Astrocyte of the cerebellum (primary cell): ENCODE measurements at regions of chr15 and their contacts with region 1.

Region 1: DNA sequence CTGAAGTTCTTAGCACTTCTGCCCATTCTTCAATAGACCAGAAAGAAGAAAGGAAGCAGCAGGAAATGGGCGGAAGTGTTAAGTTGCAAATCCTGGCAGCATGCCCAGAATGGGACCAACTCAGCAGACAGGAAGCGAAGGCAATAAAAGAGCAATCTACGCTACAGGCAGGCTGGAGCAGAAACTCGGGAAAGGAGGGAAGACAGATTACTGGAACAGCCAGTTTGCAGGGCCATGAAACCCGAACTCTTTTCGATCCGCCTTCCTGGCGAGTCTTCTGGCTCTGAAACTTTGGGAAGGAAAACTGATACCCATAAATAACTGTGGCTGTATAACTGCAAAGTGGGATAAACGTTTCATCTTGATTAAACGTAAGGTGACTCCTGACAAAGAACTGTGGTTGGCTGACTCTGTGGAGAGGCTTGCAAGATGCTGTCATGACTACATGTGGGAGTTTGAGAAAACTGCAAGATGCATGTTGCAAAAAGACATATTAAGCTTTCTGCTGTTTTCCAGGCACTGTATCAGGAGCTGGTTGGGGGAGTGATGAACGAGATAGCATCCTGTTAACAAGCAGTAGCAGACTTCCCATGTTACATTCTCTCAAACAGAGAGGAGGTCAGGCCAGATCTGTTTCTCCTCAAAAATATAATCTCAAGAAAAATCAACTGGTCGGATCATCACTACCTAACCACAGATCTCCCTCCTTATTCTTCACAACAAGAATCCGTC is 67.8 kb downstream of the FMN1 start:
- DNase-seq: peak; percentile 94
- H3K4me3 ChIP-seq: no peak overlapping the region
- CTCF ChIP-seq: no peak

Region 2: DNA sequence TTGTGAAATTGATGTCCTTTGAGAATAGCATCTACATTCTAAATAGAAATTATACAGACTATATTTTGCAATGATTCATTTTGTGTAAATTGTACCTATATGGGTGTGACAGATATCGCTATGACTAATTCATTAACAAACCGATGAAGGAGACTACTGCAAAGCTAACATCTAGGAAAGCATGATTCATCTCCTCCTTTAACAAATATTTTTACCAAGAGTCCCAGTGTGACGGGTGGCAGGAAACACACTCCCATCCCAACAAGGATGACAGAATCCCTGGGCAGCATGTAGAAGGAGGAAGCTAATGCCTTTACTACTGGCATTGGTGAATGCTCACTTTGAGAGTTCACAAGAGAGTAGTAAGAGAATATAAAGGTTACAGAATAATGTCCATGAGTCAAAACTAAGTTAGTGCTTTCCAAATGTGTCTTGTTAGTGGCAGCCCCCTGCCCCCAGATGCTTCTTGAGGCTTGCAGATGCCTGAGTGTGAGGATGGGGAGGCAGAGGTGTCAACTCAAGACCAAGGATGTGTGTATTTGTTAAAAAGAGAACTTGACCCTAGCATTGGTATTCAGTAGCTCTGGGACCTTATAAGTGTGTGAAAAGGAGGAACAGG is 112.8 kb before region 1 on chr15:
- in situ Hi-C with region 1: loop called (anchors 10 kb)
- DNase-seq: no peak
- H3K4me3 ChIP-seq: no peak overlapping the region
- CTCF ChIP-seq: no peak

Region 3: GRCh38 chr15:33045066-33045810 is 81.5 kb before region 1 on chr15:
- in situ Hi-C with region 1: no loop called
- DNase-seq: peak; percentile 66
- H3K4me3 ChIP-seq: no peak overlapping the region
- CTCF ChIP-seq: no peak

Region 4: DNA sequence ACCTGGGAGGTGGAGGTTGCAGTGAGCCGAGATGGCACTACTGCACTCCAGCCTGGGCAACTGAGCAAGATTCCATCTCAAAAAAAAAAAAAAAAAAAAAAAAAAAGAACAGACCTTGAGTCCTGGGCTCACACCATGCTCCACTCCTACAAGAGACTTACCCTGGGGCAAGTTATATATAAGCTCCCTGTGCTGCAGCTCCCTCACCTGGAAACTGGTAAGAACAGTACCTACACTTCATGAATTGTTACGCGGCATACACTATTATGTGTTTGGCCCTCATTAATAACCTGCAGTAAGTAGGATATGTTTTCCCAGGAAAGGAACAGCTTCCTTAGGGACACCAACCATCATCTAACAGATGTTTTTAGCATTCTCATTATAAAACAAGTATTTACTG is 51.8 kb before region 1 on chr15:
- in situ Hi-C with region 1: loop called (anchors 10 kb)
- DNase-seq: no peak
- H3K4me3 ChIP-seq: no peak overlapping the region
- CTCF ChIP-seq: no peak